CD4-positive, alpha-beta memory T cell (primary cell): ENCODE measurements at regions of chr2 and their contacts with region 1.

Region 1: DNA sequence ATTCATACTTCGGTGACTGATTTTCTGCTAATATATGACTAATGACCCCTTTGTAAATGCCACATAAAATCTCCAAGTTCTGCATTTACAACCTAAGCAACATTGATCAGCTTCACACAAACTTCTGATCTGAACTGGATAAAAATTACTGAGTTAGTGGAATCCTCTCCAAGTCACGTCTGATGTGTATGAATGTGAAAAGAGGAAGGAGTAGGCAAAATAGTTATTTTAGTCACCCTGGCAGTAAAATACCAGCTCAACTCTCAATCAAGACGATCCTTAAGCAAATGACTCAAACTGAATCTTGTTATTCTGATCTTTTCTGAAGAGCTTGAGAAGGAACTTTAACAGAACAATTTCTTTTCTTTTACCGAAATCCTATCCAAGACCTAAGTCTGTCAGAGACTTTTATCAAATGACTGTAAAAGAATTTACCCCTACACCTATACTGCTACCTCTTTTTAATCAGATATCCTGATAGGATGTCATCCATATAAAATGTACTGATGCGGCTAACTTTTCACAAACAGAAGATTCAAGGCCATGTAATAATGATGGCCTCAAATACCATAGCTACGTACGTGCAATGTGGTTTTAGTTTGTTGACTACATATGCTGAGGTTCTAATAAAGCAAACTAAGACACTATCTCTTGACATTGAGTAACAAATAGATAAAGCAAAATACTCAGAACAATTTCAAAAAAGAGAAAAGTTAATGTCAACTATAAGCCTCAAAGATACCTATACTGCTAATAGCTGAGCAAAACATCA is 23.7 kb downstream of the CUL3 start:
- DNase-seq: no peak
- H3K4me3 ChIP-seq: no peak overlapping the region
- H3K4me3 Mint-ChIP-seq: peak overlapping the region in 1 of 8 donors; percentile 28
- H3K27ac ChIP-seq: no peak overlapping the region
- H3K27ac Mint-ChIP-seq: peak overlapping the region in 2 of 7 donors; percentile 12 to 17
- H3K4me1 ChIP-seq: peaks cover 74% of the 10 kb centered on the region
- H3K4me1 Mint-ChIP-seq: peaks cover 12 to 56% (median 43%) of the 10 kb centered on the region in 4 donors
- H3K27me3 ChIP-seq: no peaks in the 10 kb centered on the region
- H3K27me3 Mint-ChIP-seq: no peaks in the 10 kb centered on the region

Region 2: DNA sequence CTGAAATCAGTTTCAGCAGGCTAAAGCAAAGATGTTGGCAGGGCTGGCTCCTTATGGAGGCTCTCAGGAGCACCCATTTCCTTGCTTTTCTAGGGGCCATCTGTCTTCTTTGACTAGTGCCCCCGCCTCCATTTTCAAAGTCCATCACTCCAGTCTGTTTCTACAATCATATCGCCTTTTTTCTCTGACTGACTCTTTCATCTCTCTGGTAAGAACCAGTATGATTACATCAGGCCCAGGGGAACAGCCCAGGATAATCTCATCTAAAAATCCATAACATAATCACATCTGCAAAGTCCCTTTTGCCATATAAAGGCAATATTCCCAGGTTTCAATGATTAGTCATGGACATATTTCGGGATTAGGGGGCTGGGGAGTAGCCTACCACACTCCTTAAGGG is 33.2 kb before region 1 on chr2:
- CTCF ChIA-PET with region 1: no interaction called
- POLR2A ChIA-PET with region 1: no interaction called
- intact Hi-C with region 1: loop called (anchors 5 kb)
- DNase-seq: no peak
- H3K4me3 ChIP-seq: no peak overlapping the region
- H3K4me3 Mint-ChIP-seq: peak overlapping the region in 2 of 8 donors; percentile 9 to 32
- H3K27ac ChIP-seq: no peak overlapping the region
- H3K27ac Mint-ChIP-seq: peak overlapping the region in 5 of 7 donors; percentile 33 to 73 (median 52)
- H3K4me1 ChIP-seq: peaks cover 64% of the 10 kb centered on the region
- H3K4me1 Mint-ChIP-seq: peaks cover 68 to 87% (median 73%) of the 10 kb centered on the region in 4 donors
- H3K27me3 ChIP-seq: no peaks in the 10 kb centered on the region
- H3K27me3 Mint-ChIP-seq: no peaks in the 10 kb centered on the region

Region 3: DNA sequence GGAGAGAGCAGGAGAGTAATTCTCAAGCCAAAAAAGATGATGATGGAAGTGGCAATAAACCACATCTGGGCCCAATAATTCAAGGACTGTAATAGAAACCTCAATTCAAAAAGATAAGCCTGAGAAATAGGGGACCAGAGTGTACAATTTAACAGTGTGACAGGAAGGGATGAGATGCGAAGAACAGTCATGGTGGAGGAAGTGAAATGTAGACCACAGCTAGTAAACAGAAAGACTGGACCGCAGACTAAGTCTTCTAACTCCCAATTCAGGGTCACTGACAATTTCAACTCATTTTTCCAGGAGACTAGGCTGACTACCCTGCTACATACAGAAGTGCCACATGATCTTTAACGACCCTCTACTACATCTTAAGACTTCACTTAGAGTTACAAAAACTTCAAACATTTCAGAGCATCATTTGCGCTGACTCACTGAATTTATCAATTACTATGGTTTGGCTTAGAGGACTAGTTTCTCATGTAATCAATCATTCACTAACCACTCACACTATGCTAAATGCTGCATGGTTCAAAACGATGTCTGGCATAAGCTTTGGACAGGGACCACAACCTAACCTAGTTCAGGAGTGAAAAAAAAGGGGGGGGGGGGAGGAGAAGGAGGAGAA is 14.8 kb after region 1 on chr2:
- CTCF ChIA-PET with region 1: interaction called, 5 read pairs
- POLR2A ChIA-PET with region 1: interaction called, 3 read pairs
- intact Hi-C with region 1: loop called (anchors 2 kb)
- DNase-seq: no peak
- H3K4me3 ChIP-seq: no peak overlapping the region
- H3K4me3 Mint-ChIP-seq: peak overlapping the region; percentile 1 to 81 (median 68)
- H3K27ac ChIP-seq: no peak overlapping the region
- H3K27ac Mint-ChIP-seq: peak overlapping the region in 6 of 7 donors; percentile 16 to 78 (median 40)
- H3K4me1 ChIP-seq: peaks cover 99% of the 10 kb centered on the region
- H3K4me1 Mint-ChIP-seq: peaks cover 61 to 99% (median 77%) of the 10 kb centered on the region in 4 donors
- H3K27me3 ChIP-seq: no peaks in the 10 kb centered on the region
- H3K27me3 Mint-ChIP-seq: no peaks in the 10 kb centered on the region